Activated CD4-positive, alpha-beta T cell treated with anti-CD3 and anti-CD28 coated beads, Interleukin-2, amount 10 ng/mL, durations not matched to agents 24 days and 14 days (primary cell): ENCODE measurements at regions of chr4 and their contacts with region 1.

Region 1: GRCh38 chr4:98260579-98261290 is 449 bp upstream of the RAP1GDS1 start:
- DNase-seq: peak; percentile 97
- H3K4me3 Mint-ChIP-seq: peak overlapping the region; percentile 95
- H3K27ac Mint-ChIP-seq: peak overlapping the region; percentile 96
- H3K4me1 Mint-ChIP-seq: peaks cover 35% of the 10 kb centered on the region
- H3K27me3 Mint-ChIP-seq: peaks cover 4% of the 10 kb centered on the region

Region 2: GRCh38 chr4:98143001-98143899 is 117.5 kb before region 1 on chr4 and contains the start of gene STPG2:
- intact Hi-C with region 1: loop called (anchors 1 kb)
- DNase-seq: peak; percentile 98
- H3K4me3 Mint-ChIP-seq: peak within 1 kb of the TSS; percentile 95
- H3K27ac Mint-ChIP-seq: peak within 1 kb of the TSS; percentile 96
- H3K4me1 Mint-ChIP-seq: peaks cover 11% of the 10 kb centered on the region
- H3K27me3 Mint-ChIP-seq: peaks cover 14% of the 10 kb centered on the region
- total RNA-seq, gene STPG2: not detected in 2 replicates

Region 3: DNA sequence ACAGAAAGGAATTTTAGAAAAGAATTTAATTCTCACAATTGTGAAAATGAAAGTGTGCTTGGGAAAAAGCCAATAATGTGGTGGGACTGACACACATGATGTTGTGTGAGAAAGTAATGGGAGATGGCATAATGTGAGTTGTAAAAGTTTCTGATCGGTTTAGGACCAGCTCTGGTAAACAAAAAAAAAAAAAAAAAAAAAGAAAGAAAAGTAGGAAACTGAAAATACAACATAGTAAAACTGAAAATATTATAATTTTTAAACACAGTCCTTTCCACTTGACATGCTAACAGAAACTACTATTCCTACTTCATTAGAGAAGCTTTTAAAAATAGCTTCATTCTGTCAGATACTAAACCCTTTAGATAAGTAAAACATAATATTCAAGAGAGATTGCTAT is 28.6 kb after region 1 on chr4:
- intact Hi-C with region 1: loop called (anchors 2 kb)
- DNase-seq: no peak
- H3K4me3 Mint-ChIP-seq: peak overlapping the region; percentile 58
- H3K27ac Mint-ChIP-seq: peak overlapping the region; percentile 76
- H3K4me1 Mint-ChIP-seq: peaks cover 30% of the 10 kb centered on the region
- H3K27me3 Mint-ChIP-seq: no peaks in the 10 kb centered on the region

Region 4: DNA sequence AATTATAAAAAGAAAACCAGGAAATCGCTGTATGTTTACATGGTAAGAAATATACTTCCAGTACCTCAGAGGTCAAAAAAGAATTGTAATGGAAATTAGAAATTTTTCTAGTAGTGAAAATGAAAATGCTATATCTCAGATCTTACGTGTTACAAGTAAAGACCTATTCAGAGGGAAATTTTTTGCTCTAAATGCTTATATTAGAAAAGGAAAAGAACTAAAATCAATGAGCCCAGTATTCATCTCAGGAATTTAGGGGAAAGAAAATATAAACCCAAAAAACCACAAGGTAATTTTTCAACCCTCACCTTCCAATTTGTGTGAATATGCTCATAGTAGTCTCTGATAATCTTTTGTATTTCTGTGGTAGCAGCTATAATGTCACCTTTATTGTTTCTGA is 146.1 kb after region 1 on chr4:
- intact Hi-C with region 1: loop called (anchors 2 kb)
- DNase-seq: no peak
- H3K4me3 Mint-ChIP-seq: no peak overlapping the region
- H3K27ac Mint-ChIP-seq: no peak overlapping the region
- H3K4me1 Mint-ChIP-seq: peaks cover 12% of the 10 kb centered on the region
- H3K27me3 Mint-ChIP-seq: no peaks in the 10 kb centered on the region